PC-9 (cell line): ENCODE measurements at regions of chr16 and their contacts with region 1.

Region 1: GRCh38 chr16:30740364-30741251 is 7.6 kb upstream of the PHKG2 start:
- DNase-seq: peak; percentile 98
- H3K4me3 ChIP-seq: peak overlapping the region; percentile 68
- H3K27ac ChIP-seq: peak overlapping the region; percentile 96
- H3K4me1 ChIP-seq: peaks cover 33% of the 10 kb centered on the region
- H3K27me3 ChIP-seq: no peaks in the 10 kb centered on the region
- CTCF ChIP-seq: 0 out of 2 replicates have a peak, but pooled peaks have one; percentile 17

Region 2: DNA sequence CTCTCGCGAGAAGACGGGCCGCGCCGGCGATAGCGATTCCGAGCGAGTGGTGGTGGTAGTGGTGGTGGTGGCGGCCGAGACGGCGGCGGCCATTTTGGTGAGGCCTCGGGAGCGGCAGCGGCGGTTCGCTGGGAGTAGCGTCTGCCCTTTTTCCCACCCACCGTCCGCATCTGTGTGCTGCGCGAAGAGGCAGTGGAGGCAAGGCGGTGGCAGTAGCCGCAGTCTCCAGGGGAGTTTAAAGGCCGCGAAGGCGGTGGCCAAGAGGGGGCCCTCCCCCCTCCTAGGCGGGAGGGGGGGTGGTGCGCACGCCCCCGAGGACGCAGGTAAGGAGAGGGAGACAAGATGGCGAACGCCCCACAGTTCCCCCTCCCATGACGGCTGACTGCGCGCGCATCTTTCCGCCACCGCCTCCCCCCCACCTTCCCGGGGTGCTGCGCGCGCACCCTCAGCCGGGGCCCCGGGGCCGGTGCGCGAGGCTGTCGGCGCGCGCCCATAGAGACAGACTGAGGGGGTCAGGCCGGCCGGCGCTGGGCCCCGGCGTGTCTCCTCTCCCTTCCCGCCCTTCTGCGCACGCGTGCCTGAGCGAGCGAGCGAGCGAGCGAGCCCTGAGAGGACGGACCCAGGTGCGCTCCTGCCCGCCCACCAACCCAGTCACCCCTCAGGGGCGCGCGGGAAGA is 42.3 kb before region 1 on chr16:
- CTCF ChIA-PET with region 1: no interaction called
- POLR2A ChIA-PET with region 1: no interaction called
- intact Hi-C with region 1: loop called (anchors 1 kb)
- DNase-seq: peak; percentile 91 to 99
- H3K4me3 ChIP-seq: peak overlapping the region; percentile 96
- H3K27ac ChIP-seq: peak overlapping the region; percentile 95
- H3K4me1 ChIP-seq: peaks cover 22% of the 10 kb centered on the region
- H3K27me3 ChIP-seq: no peaks in the 10 kb centered on the region
- CTCF ChIP-seq: no peak

Region 3: GRCh38 chr16:30775392-30776188 is 35.0 kb after region 1 on chr16:
- CTCF ChIA-PET with region 1: no interaction called
- POLR2A ChIA-PET with region 1: interaction called, 4 read pairs
- intact Hi-C with region 1: loop called (anchors 5 kb)
- DNase-seq: peak; percentile 71 to 79
- H3K4me3 ChIP-seq: peak overlapping the region; percentile 84
- H3K27ac ChIP-seq: peak overlapping the region; percentile 73
- H3K4me1 ChIP-seq: peaks cover 8% of the 10 kb centered on the region; the same call in 1 of the 2 replicates
- H3K27me3 ChIP-seq: no peaks in the 10 kb centered on the region
- CTCF ChIP-seq: no peak; the same call in 1 of the 2 replicates

Region 4: GRCh38 chr16:30813821-30814189 is 73.2 kb after region 1 on chr16:
- CTCF ChIA-PET with region 1: no interaction called
- POLR2A ChIA-PET with region 1: interaction called, 3 read pairs
- intact Hi-C with region 1: loop called (anchors 2 kb)
- DNase-seq: no peak
- H3K4me3 ChIP-seq: peak overlapping the region; percentile 53
- H3K27ac ChIP-seq: peak overlapping the region; percentile 16; the same call in 1 of the 2 replicates
- H3K4me1 ChIP-seq: peaks cover 9% of the 10 kb centered on the region
- H3K27me3 ChIP-seq: no peaks in the 10 kb centered on the region
- CTCF ChIP-seq: no peak

Region 5: DNA sequence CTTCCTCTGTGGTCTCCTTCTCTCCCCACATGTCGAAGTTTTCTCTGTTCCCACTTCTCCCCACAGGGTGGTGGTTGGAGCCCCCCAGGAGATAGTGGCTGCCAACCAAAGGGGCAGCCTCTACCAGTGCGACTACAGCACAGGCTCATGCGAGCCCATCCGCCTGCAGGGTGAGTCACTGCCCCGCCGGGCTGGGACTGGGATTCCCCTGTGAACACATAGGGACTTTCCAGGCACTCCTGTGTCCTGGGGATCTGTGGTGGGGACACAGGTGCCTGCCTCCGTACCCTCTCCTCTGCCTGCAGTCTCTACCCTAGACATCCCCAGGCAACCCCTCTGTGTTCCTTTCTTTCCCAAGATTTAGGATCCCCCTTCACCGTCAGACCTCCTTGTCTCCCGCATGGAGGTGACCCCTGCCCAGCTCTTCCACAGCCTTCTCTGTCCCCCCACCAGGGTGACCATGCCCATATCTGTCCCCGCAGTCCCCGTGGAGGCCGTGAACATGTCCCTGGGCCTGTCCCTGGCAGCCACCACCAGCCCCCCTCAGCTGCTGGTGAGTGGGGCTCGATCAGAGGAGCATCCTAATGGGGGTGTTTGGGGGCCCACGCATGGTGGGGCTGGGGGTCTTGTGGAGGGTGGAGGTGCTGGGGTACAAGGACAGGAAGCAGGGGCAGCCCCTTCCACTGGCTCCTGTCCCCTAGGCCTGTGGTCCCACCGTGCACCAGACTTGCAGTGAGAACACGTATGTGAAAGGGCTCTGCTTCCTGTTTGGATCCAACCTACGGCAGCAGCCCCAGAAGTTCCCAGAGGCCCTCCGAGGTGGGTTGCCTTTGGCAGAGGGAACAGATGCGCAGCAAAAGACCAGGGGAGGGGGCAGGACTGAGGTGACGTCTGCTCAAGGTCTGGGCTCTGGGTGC is 525.0 kb after region 1 on chr16:
- CTCF ChIA-PET with region 1: no interaction called
- POLR2A ChIA-PET with region 1: interaction called, 11 read pairs
- intact Hi-C with region 1: no loop called
- DNase-seq: peak; percentile 66 to 74
- H3K4me3 ChIP-seq: no peak overlapping the region; the same call in 1 of the 2 replicates
- H3K27ac ChIP-seq: peak overlapping the region; percentile 58
- H3K4me1 ChIP-seq: peaks cover 27% of the 10 kb centered on the region
- H3K27me3 ChIP-seq: no peaks in the 10 kb centered on the region
- CTCF ChIP-seq: no peak